ENCODE measurements at regions of chr19 and their contacts with region 1.

Region 1: GRCh38 chr19:38402967-38403861 is at the start of gene FAM98C:
- DNase-seq: peak; percentile 98
- H3K4me3 Mint-ChIP-seq: peak within 1 kb of the TSS; percentile 90
- H3K27ac Mint-ChIP-seq: peak within 1 kb of the TSS; percentile 84
- H3K4me1 Mint-ChIP-seq: peaks cover 15% of the 10 kb centered on the region
- H3K27me3 Mint-ChIP-seq: no peaks in the 10 kb centered on the region
- total RNA-seq, gene FAM98C: 21.5 to 27.0 TPM

Region 2: DNA sequence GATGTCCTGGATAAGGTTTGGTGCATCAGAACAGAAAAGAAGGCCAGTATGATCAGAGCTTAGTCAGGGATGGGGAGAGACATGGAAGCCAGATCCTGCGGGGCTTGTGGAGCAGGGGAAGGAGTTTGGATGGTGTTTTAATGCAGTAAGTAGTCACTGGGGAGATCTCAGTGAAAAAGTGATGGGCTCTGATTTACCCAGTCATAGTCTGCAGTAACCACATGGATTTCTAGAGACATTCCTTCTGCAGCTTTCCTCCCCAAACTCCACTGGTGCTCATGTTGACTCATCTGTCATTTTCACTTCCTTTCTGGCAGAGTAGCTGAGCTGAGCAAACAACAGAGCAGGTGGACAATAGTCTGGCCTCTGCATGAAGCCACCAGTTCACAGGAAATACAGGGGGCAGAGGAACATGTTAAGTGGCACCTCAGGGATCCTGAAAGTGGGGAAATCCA is 323.3 kb before region 1 on chr19:
- CTCF ChIA-PET with region 1: no interaction called
- intact Hi-C with region 1: no loop called
- DNase-seq: peak; percentile 13
- H3K4me3 Mint-ChIP-seq: no peak overlapping the region
- H3K27ac Mint-ChIP-seq: peak overlapping the region; percentile 83
- H3K4me1 Mint-ChIP-seq: peaks cover 21% of the 10 kb centered on the region
- H3K27me3 Mint-ChIP-seq: no peaks in the 10 kb centered on the region

Region 3: GRCh38 chr19:38245826-38246498 is 157.3 kb before region 1 on chr19:
- CTCF ChIA-PET with region 1: interaction called, 3 read pairs
- intact Hi-C with region 1: loop called (anchors 2 kb)
- DNase-seq: no peak
- H3K4me3 Mint-ChIP-seq: no peak overlapping the region
- H3K27ac Mint-ChIP-seq: no peak overlapping the region
- H3K4me1 Mint-ChIP-seq: peaks cover 2% of the 10 kb centered on the region
- H3K27me3 Mint-ChIP-seq: no peaks in the 10 kb centered on the region

Region 4: GRCh38 chr19:38277969-38278680 is 125.1 kb before region 1 on chr19:
- CTCF ChIA-PET with region 1: no interaction called
- intact Hi-C with region 1: no loop called
- DNase-seq: no peak
- H3K4me3 Mint-ChIP-seq: no peak overlapping the region
- H3K27ac Mint-ChIP-seq: no peak overlapping the region
- H3K4me1 Mint-ChIP-seq: peaks cover 7% of the 10 kb centered on the region
- H3K27me3 Mint-ChIP-seq: no peaks in the 10 kb centered on the region

Region 5: GRCh38 chr19:38425810-38426466 is 22.7 kb after region 1 on chr19 and contains the start of gene RASGRP4:
- CTCF ChIA-PET with region 1: interaction called, 6 read pairs
- intact Hi-C with region 1: loop called (anchors 2 kb)
- DNase-seq: peak; percentile 78
- H3K4me3 Mint-ChIP-seq: no peak within 1 kb of the TSS
- H3K27ac Mint-ChIP-seq: peak within 1 kb of the TSS; percentile 61
- H3K4me1 Mint-ChIP-seq: peaks cover 31% of the 10 kb centered on the region
- H3K27me3 Mint-ChIP-seq: peaks cover 2% of the 10 kb centered on the region
- total RNA-seq, gene RASGRP4: 0.30 to 0.41 TPM

Region 6: GRCh38 chr19:38514812-38515633 is 111.8 kb after region 1 on chr19:
- CTCF ChIA-PET with region 1: interaction called, 18 read pairs
- intact Hi-C with region 1: loop called (anchors 1 kb)
- DNase-seq: peak; percentile 82
- H3K4me3 Mint-ChIP-seq: no peak overlapping the region
- H3K27ac Mint-ChIP-seq: no peak overlapping the region
- H3K4me1 Mint-ChIP-seq: peaks cover 7% of the 10 kb centered on the region
- H3K27me3 Mint-ChIP-seq: no peaks in the 10 kb centered on the region

Region 7: DNA sequence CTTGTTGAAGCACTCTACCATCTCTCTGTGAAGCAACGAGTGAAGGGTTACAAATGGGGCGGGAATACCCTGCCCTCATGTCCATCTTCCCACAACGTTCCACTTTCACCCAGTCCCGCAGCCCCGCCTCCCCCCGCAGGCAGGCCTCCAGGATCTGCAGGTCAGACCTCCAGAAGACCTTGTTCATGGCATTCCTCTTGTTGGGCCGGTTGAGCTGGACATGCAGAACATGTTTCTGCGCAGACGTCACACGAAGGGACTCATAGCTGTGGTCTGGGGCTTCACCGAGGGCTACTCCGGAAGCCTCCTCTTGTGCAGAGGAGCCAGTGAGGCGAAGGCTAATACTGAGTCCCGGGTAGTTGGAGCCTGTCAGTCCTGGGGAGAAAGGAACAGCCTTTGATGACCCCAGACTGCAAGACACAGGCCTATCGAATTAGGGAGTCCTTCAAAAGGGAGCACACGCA is 428.0 kb after region 1 on chr19:
- CTCF ChIA-PET with region 1: no interaction called
- intact Hi-C with region 1: loop called (anchors 10 kb)
- DNase-seq: peak; percentile 64
- H3K4me3 Mint-ChIP-seq: peak overlapping the region; percentile 79
- H3K27ac Mint-ChIP-seq: peak overlapping the region; percentile 94
- H3K4me1 Mint-ChIP-seq: peaks cover 34% of the 10 kb centered on the region
- H3K27me3 Mint-ChIP-seq: no peaks in the 10 kb centered on the region

Measured in activated naive CD4-positive, alpha-beta T cell treated with anti-CD3 and anti-CD28 coated beads for 36 hours (primary cell).